Right ventricle myocardium inferior (tissue), 1 donor: ENCODE measurements at regions of chr4 and their contacts with region 1.

Region 1: GRCh38 chr4:123396307-123397143 is at the start of gene SPRY1:
- DNase-seq: peak; percentile 89
- ATAC-seq: peak; percentile 89
- total RNA-seq, gene SPRY1: 37.0 TPM

Region 2: DNA sequence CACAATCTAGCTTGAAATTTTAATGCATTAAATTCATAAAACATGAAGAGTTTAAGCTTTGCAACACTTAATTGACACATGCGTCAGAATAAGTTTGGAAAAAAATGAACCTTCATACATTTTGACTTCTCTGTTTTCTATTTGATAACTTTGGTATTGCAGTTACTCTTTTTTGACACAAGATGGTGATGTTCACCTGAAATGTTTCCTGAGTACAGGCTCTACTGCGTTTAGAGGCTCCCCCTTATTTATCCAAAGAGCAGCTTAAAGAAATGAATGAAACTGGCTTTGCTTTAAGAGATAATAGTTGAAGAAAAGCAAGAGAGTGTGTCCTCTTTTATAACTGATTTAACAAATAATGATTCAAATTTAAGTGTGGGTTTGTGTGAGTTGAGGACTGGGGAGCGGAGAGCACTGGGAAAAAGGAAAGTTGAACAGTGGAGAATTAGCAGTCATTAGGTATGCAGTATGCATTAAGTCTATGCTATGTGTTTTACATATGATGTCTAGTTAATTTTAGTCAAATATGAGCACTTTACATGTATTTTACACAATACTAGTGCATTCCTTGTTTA is 293.5 kb before region 1 on chr4:
- intact Hi-C with region 1: loop called (anchors 10 kb)
- DNase-seq: no peak
- ATAC-seq: peak; percentile 57

Region 3: GRCh38 chr4:123250843-123251242 is 145.7 kb before region 1 on chr4:
- intact Hi-C with region 1: loop called (anchors 2 kb)
- DNase-seq: peak; percentile 65
- ATAC-seq: peak; percentile 75

Region 4: DNA sequence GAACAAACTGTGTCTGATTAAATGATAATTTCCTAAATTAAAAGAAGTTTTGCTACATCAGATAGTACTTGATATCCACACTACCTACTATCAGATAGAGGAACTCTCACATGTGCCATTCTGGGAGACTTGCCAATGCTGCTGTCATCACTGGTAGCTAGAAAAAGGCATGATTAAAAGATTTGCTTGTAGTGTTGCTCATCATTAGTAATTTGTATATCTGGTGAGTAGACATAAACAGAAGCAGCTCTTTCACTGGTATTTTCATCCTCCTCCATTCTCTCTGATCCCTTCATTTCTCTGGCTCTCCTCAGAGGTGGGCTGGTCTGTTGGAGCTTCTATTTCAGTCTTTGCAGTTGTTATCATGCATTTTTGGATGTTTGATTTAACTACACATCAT is 56.1 kb after region 1 on chr4:
- intact Hi-C with region 1: no loop called
- DNase-seq: peak; percentile 71
- ATAC-seq: peak; percentile 20

Region 5: GRCh38 chr4:123505095-123506010 is 108.8 kb after region 1 on chr4:
- intact Hi-C with region 1: loop called (anchors 2 kb)
- DNase-seq: peak; percentile 84
- ATAC-seq: peak; percentile 77

Region 6: DNA sequence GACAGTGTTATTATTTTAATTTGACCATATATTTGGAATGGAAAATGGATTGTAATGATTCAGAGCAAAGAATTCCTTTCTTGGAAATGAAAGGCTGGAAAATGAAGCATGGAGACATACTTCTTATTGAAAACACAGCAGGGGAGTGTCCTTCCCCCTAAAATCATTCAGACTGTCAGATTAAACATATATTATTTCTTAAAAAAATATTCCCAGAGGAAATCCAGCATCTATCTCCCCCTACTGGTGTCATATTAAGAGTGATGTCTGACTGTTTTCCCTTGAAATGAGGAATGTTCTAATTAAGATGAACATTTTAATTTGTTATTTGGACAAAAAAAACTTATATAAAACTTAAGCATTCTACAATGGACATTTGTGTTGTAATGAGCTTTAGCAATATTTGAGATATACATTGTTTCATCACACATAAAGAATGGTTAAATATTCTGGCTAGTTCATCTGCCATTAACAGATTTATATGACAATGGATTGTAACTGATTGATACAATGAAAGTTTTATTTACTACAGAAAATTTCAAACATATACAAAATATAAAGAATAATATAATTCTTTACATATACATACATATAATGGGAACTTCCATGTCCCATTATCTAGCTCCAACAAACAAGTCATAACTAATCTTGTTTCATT is 264.7 kb after region 1 on chr4:
- intact Hi-C with region 1: loop called (anchors 5 kb)
- DNase-seq: no peak
- ATAC-seq: no peak

Region 7: GRCh38 chr4:124111922-124112321 is 715.4 kb after region 1 on chr4:
- intact Hi-C with region 1: loop called (anchors 5 kb)
- DNase-seq: no peak
- ATAC-seq: peak; percentile 86